ENCODE measurements at regions of chr1 and their contacts with region 1.

Region 1: GRCh38 chr1:226547754-226548191 is 791 bp upstream of the STUM start:
- DNase-seq: peak; percentile 83
- ATAC-seq: peak; percentile 66
- H3K4me3 Mint-ChIP-seq: no peak overlapping the region
- H3K27ac Mint-ChIP-seq: no peak overlapping the region
- H3K4me1 Mint-ChIP-seq: peaks cover 13% of the 10 kb centered on the region
- H3K27me3 Mint-ChIP-seq: peaks cover 43% of the 10 kb centered on the region
- CTCF ChIP-seq: peak; percentile 71

Region 2: DNA sequence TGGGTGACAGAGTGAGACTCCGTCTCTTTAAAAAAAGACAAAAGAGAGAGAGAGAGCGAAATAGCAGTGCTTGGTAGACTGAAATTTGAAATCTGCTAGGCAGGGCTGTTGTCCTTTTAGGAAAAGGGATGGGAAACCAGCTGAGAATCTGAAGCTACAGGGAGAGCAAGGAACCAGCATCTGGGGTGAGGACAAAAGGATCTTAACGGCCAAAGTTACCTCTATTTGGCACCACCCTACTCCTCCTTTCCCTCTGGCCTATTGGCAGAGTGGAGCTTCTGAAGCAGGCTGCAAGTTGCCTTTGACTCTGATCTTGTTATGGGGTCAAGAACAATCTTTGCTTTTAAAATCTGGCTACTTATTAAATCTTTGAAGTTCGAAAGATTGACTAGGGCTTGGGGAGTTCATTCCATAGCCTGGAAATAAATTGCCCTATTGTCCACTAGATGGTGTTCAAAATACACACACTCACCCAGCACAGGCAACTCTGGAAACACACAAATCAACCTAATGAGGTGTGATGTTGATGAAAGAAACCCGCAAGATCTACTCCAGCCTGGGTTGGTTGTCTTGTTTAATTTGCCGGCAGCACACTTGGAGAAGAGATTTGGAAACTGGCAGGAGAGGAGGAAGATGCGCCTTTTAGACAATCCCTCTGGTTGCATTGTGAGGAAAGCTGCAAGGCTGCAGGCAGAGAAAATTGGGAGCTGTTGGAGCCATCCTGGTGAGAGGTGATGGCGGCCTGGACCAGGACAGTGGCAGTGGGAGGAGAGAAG is 123.4 kb before region 1 on chr1:
- CTCF ChIA-PET with region 1: interaction called, 12 read pairs
- POLR2A ChIA-PET with region 1: no interaction called
- intact Hi-C with region 1: loop called (anchors 10 kb)
- DNase-seq: peak; percentile 29
- ATAC-seq: peak; percentile 54
- H3K4me3 Mint-ChIP-seq: no peak overlapping the region
- H3K27ac Mint-ChIP-seq: no peak overlapping the region
- H3K4me1 Mint-ChIP-seq: peaks cover 27% of the 10 kb centered on the region
- H3K27me3 Mint-ChIP-seq: no peaks in the 10 kb centered on the region
- CTCF ChIP-seq: peak; percentile 74

Region 3: GRCh38 chr1:226532553-226532952 is 15.2 kb before region 1 on chr1:
- CTCF ChIA-PET with region 1: interaction called, 19 read pairs
- POLR2A ChIA-PET with region 1: no interaction called
- intact Hi-C with region 1: no loop called
- DNase-seq: no peak
- ATAC-seq: no peak
- H3K4me3 Mint-ChIP-seq: no peak overlapping the region
- H3K27ac Mint-ChIP-seq: no peak overlapping the region
- H3K4me1 Mint-ChIP-seq: no peaks in the 10 kb centered on the region
- H3K27me3 Mint-ChIP-seq: peaks cover 4% of the 10 kb centered on the region
- CTCF ChIP-seq: no peak

Region 4: GRCh38 chr1:226569879-226570547 is 22.2 kb after region 1 on chr1:
- CTCF ChIA-PET with region 1: interaction called, 23 read pairs
- POLR2A ChIA-PET with region 1: no interaction called
- intact Hi-C with region 1: no loop called
- DNase-seq: peak; percentile 55
- ATAC-seq: peak; percentile 89
- H3K4me3 Mint-ChIP-seq: no peak overlapping the region
- H3K27ac Mint-ChIP-seq: no peak overlapping the region
- H3K4me1 Mint-ChIP-seq: no peaks in the 10 kb centered on the region
- H3K27me3 Mint-ChIP-seq: peaks cover 3% of the 10 kb centered on the region
- CTCF ChIP-seq: no peak

Region 5: GRCh38 chr1:226608699-226609505 is 61.1 kb after region 1 on chr1:
- CTCF ChIA-PET with region 1: interaction called, 14 read pairs
- POLR2A ChIA-PET with region 1: no interaction called
- intact Hi-C with region 1: loop called (anchors 5 kb)
- DNase-seq: peak; percentile 79
- ATAC-seq: peak; percentile 82
- H3K4me3 Mint-ChIP-seq: no peak overlapping the region
- H3K27ac Mint-ChIP-seq: no peak overlapping the region
- H3K4me1 Mint-ChIP-seq: no peaks in the 10 kb centered on the region
- H3K27me3 Mint-ChIP-seq: no peaks in the 10 kb centered on the region
- CTCF ChIP-seq: peak; percentile 96

Region 6: GRCh38 chr1:226723657-226724532 is 176.1 kb after region 1 on chr1:
- CTCF ChIA-PET with region 1: no interaction called
- POLR2A ChIA-PET with region 1: no interaction called
- intact Hi-C with region 1: no loop called
- DNase-seq: peak; percentile 59
- ATAC-seq: peak; percentile 31
- H3K4me3 Mint-ChIP-seq: peak overlapping the region; percentile 92
- H3K27ac Mint-ChIP-seq: peak overlapping the region; percentile 95
- H3K4me1 Mint-ChIP-seq: peaks cover 91% of the 10 kb centered on the region
- H3K27me3 Mint-ChIP-seq: no peaks in the 10 kb centered on the region
- CTCF ChIP-seq: no peak